Mammary epithelial cell (primary cell): ENCODE measurements at regions of chr1 and their contacts with region 1.

Region 1: DNA sequence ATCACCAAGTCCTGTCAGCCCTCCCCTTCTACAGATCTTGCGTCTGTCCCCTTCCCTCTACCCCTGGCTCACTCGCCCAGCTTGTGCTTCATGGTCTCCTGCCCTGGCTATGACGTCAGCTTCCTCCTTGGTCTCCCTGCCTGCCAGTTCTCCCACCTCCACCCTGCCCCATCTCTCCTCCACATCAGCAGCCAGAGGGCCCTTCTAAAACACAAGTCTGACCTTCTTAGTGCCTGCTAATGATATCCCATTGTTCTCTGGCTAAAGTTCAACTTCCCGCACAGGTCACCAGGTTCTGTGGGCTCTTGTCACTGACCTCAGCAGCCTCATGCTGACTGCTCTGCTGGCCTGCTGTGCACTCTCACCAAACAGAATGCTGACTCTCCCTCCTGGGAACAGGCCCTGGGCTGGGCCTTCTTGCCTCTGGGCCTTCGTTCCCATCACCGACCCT is 24.7 kb upstream of the MYCL start:
- DNase-seq: no peak
- H3K4me3 ChIP-seq: no peak overlapping the region
- H3K27ac ChIP-seq: no peak overlapping the region
- H3K4me1 ChIP-seq: peaks cover 26% of the 10 kb centered on the region
- H3K27me3 ChIP-seq: no peaks in the 10 kb centered on the region
- CTCF ChIP-seq: no peak

Region 2: GRCh38 chr1:39866767-39867166 is 59.6 kb before region 1 on chr1:
- CTCF ChIA-PET with region 1: no interaction called
- dilution Hi-C with region 1: no loop called
- in situ Hi-C with region 1: no loop called
- intact Hi-C with region 1: no loop called
- DNase-seq: peak; percentile 57
- H3K4me3 ChIP-seq: no peak overlapping the region
- H3K27ac ChIP-seq: no peak overlapping the region
- H3K4me1 ChIP-seq: no peaks in the 10 kb centered on the region
- H3K27me3 ChIP-seq: no peaks in the 10 kb centered on the region
- CTCF ChIP-seq: no peak

Region 3: GRCh38 chr1:39960431-39960958 is 34.1 kb after region 1 on chr1:
- CTCF ChIA-PET with region 1: no interaction called
- dilution Hi-C with region 1: no loop called
- in situ Hi-C with region 1: no loop called
- intact Hi-C with region 1: no loop called
- DNase-seq: peak; percentile 79
- H3K4me3 ChIP-seq: no peak overlapping the region
- H3K27ac ChIP-seq: no peak overlapping the region
- H3K4me1 ChIP-seq: peaks cover 39% of the 10 kb centered on the region
- H3K27me3 ChIP-seq: no peaks in the 10 kb centered on the region
- CTCF ChIP-seq: no peak

Region 4: DNA sequence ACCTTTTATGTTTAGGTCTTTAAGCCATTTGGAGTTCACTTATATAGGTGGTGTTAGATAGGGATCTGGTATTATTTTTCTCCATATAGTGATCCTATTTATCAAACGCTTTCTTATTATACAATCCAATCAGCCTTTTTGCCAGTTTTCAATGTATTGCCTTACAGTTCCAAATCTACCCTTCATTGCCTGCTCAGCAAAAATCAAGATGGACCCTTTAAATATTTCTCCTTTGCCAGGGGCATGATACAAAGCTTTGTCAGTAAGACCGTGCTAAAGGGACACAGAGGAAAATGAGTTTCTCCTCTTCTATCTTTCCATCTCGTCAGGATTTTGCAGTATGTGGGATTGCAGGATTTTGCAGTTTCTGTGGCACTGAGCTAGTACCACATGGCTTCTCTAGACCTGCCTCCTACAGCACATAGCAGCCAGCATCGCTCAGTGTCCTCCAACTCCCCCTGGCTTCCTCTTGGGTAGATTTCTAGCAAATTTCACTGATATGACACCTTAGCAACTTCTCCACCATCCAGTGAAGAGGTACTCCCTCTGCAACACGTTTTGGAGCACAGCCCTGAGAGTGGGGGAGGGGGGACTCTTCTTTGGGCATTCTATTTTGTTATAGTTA is 91.7 kb after region 1 on chr1:
- CTCF ChIA-PET with region 1: no interaction called
- dilution Hi-C with region 1: no loop called
- in situ Hi-C with region 1: no loop called
- intact Hi-C with region 1: no loop called
- DNase-seq: no peak
- H3K4me3 ChIP-seq: no peak overlapping the region
- H3K27ac ChIP-seq: no peak overlapping the region
- H3K4me1 ChIP-seq: peaks cover 23% of the 10 kb centered on the region
- H3K27me3 ChIP-seq: no peaks in the 10 kb centered on the region
- CTCF ChIP-seq: no peak

Region 5: DNA sequence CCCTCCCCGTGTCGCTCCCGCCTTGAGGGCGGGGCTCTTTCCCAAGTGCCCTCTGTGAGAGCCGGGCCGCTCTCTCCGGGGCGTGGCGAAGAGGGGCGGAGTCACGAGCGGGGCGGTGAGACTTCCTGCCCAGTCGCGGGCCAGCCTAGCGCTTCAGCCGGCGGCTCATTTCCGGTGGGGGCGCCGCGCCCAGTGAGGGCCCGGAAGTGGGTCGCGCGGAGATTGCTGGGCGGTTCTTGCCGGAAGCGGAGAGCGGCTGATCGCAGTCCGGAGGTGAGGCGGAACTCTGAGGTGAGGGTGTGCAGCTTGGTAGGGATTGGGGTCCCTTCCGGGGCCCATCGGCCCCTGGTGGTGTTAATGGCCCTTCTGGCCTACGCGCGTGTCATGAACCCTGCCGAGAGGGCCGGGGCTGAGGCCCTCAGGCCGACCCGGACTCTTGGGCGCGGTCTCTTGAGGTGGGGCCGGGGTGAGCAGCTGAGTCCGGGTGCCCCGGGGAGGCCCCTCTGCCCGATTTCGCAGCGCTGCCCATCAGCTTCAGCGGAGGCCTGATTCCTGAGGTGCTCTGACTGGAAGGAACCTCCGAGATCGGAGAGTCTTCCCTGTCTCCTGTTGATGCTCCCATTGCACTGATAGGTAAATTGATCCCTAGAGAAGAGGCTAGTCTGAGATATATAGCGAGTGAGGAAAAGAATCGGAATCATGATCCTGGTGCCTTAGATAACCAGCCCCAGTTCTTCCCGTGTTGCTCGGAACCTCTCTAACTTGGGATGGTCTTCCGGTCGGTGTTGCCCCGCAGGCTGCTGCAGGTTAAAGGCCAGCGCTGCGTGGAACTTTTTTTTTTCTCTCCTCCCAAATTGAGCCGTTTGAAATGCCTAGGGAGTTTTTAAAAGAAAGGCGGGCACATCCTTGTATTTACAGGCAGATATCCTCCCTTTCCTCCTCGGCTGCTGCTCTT is 114.4 kb after region 1 on chr1 and contains the start of gene CAP1:
- CTCF ChIA-PET with region 1: no interaction called
- dilution Hi-C with region 1: no loop called
- in situ Hi-C with region 1: loop called (anchors 5 to 10 kb)
- intact Hi-C with region 1: no loop called
- DNase-seq: peak; percentile 99
- H3K4me3 ChIP-seq: peak within 1 kb of the TSS; percentile 93 to 98 (median 98)
- H3K27ac ChIP-seq: peak within 1 kb of the TSS; percentile 85
- H3K4me1 ChIP-seq: peaks cover 46% of the 10 kb centered on the region
- H3K27me3 ChIP-seq: no peaks in the 10 kb centered on the region
- CTCF ChIP-seq: no peak
- total RNA-seq, gene CAP1: 715 to 877 TPM